Activated CD4-positive, alpha-beta memory T cell treated with anti-CD3 and anti-CD28 coated beads for 36 hours (primary cell): ENCODE measurements at regions of chr3 and their contacts with region 1.

Region 1: DNA sequence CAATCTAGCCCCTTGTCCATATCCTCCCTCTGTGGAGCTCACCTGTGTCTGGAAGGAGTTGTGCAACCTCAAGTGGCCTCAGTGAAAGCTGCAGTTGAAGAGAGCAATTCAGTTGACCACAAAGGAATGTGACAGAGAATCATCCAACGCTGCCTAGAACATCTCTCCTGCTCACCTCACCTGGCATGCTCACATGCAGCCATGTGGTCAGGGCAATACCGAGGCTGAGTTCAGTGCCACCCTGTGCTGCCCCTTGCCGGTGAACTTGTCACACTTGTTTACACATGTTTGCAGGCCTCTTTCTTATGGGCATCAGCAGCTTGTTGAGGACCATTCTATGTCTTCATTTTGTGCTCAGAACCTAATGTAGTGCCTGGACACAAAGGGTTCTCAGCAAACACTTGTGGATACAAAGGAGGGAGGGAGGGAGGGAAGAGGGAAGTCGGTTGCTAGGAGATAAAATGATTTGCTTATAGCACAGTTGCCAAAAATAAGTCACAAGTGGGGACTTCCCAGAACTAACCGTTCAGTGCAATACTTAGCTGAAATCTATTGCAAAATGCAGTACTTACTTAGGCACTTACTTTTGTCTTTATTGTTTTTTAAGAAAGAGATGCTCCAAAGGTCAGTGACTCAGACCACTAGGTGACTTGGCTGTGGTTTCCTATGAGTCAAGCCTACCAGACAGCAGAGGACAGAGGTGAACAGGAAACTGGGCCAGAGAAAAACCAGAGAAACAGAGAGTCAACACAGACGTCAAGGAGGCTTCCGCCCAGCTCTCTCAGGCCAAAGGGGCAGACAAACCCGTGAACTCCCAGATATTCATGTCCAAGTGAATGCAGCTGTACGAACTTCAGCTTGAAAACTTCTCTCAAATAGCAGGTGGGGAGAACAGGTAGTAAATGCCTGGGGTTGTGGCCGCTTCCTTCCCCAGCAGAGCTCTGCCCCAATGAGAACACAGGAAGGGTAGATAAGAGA is 227.8 kb upstream of the CTNNB1 start:
- DNase-seq: peak; percentile 64
- H3K4me3 Mint-ChIP-seq: no peak overlapping the region
- H3K27ac Mint-ChIP-seq: peak overlapping the region; percentile 73
- H3K4me1 Mint-ChIP-seq: peaks cover 18% of the 10 kb centered on the region
- H3K27me3 Mint-ChIP-seq: peaks cover 29% of the 10 kb centered on the region

Region 2: GRCh38 chr3:40321818-40322217 is 649.7 kb before region 1 on chr3:
- CTCF ChIA-PET with region 1: no interaction called
- POLR2A ChIA-PET with region 1: no interaction called
- intact Hi-C with region 1: no loop called
- DNase-seq: peak; percentile 16
- H3K4me3 Mint-ChIP-seq: no peak overlapping the region
- H3K27ac Mint-ChIP-seq: no peak overlapping the region
- H3K4me1 Mint-ChIP-seq: no peaks in the 10 kb centered on the region
- H3K27me3 Mint-ChIP-seq: peaks cover 9% of the 10 kb centered on the region

Region 3: DNA sequence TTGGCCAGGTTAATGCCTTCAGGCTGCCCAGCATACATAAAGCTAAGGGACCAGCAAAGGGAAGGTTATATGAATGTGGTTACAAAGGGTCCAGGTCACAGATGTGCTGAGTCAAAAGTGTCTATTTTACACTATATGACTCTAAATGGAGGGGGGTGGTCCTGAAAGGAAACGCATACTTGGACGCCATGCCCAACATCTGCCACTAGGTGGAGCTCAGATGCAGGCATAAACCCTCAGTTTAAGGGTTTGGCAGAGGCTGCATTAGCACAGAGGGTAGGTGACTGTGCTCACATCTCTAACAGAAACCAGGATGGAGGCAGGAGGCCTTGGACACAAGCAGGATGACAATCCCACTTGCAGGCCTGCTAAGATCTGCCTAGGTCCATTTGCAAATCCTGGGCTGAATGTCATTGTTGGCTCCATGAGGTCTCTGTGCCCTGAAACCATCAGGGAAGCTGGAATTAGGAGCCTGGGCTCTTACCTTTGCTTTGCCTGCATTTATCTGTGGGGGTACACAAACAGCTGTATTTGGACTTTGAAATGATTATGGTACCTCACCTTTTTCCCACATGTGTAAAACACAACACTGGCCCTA is 390.9 kb before region 1 on chr3:
- CTCF ChIA-PET with region 1: no interaction called
- POLR2A ChIA-PET with region 1: no interaction called
- intact Hi-C with region 1: loop called (anchors 10 kb)
- DNase-seq: peak; percentile 71
- H3K4me3 Mint-ChIP-seq: no peak overlapping the region
- H3K27ac Mint-ChIP-seq: no peak overlapping the region
- H3K4me1 Mint-ChIP-seq: no peaks in the 10 kb centered on the region
- H3K27me3 Mint-ChIP-seq: peaks cover 11% of the 10 kb centered on the region

Region 4: GRCh38 chr3:40961104-40961857 is 10.2 kb before region 1 on chr3:
- CTCF ChIA-PET with region 1: interaction called, 3 read pairs
- POLR2A ChIA-PET with region 1: no interaction called
- intact Hi-C with region 1: loop called (anchors 1 kb)
- DNase-seq: no peak
- H3K4me3 Mint-ChIP-seq: no peak overlapping the region
- H3K27ac Mint-ChIP-seq: no peak overlapping the region
- H3K4me1 Mint-ChIP-seq: peaks cover 6% of the 10 kb centered on the region
- H3K27me3 Mint-ChIP-seq: peaks cover 10% of the 10 kb centered on the region

Region 5: GRCh38 chr3:41117398-41117870 is 146.0 kb after region 1 on chr3:
- CTCF ChIA-PET with region 1: no interaction called
- POLR2A ChIA-PET with region 1: interaction called, 3 read pairs
- intact Hi-C with region 1: loop called (anchors 1 kb)
- DNase-seq: peak; percentile 94
- H3K4me3 Mint-ChIP-seq: peak overlapping the region; percentile 16
- H3K27ac Mint-ChIP-seq: peak overlapping the region; percentile 78
- H3K4me1 Mint-ChIP-seq: peaks cover 24% of the 10 kb centered on the region
- H3K27me3 Mint-ChIP-seq: no peaks in the 10 kb centered on the region

Region 6: GRCh38 chr3:41608347-41608746 is 636.9 kb after region 1 on chr3:
- CTCF ChIA-PET with region 1: no interaction called
- POLR2A ChIA-PET with region 1: no interaction called
- intact Hi-C with region 1: loop called (anchors 2 kb)
- DNase-seq: no peak
- H3K4me3 Mint-ChIP-seq: no peak overlapping the region
- H3K27ac Mint-ChIP-seq: no peak overlapping the region
- H3K4me1 Mint-ChIP-seq: peaks cover 15% of the 10 kb centered on the region
- H3K27me3 Mint-ChIP-seq: no peaks in the 10 kb centered on the region